Dendritic cell treated with granulocyte-macrophage colony-stimulating factor and Interleukin-4, amounts not matched to agents 40 ng/mL and 50 ng/mL, for 4 days (primary cell): ENCODE measurements at regions of chr19 and their contacts with region 1.

Region 1: GRCh38 chr19:58002384-58003173 is at the start of gene ZNF606:
- H3K4me3 Mint-ChIP-seq: peak within 1 kb of the TSS; percentile 85
- H3K27ac Mint-ChIP-seq: peak within 1 kb of the TSS; percentile 92
- H3K4me1 Mint-ChIP-seq: peaks cover 37% of the 10 kb centered on the region
- H3K27me3 Mint-ChIP-seq: no peaks in the 10 kb centered on the region

Region 2: GRCh38 chr19:57689750-57690149 is 312.8 kb before region 1 on chr19:
- intact Hi-C with region 1: no loop called
- H3K4me3 Mint-ChIP-seq: no peak overlapping the region
- H3K27ac Mint-ChIP-seq: no peak overlapping the region
- H3K4me1 Mint-ChIP-seq: no peaks in the 10 kb centered on the region
- H3K27me3 Mint-ChIP-seq: no peaks in the 10 kb centered on the region

Region 3: DNA sequence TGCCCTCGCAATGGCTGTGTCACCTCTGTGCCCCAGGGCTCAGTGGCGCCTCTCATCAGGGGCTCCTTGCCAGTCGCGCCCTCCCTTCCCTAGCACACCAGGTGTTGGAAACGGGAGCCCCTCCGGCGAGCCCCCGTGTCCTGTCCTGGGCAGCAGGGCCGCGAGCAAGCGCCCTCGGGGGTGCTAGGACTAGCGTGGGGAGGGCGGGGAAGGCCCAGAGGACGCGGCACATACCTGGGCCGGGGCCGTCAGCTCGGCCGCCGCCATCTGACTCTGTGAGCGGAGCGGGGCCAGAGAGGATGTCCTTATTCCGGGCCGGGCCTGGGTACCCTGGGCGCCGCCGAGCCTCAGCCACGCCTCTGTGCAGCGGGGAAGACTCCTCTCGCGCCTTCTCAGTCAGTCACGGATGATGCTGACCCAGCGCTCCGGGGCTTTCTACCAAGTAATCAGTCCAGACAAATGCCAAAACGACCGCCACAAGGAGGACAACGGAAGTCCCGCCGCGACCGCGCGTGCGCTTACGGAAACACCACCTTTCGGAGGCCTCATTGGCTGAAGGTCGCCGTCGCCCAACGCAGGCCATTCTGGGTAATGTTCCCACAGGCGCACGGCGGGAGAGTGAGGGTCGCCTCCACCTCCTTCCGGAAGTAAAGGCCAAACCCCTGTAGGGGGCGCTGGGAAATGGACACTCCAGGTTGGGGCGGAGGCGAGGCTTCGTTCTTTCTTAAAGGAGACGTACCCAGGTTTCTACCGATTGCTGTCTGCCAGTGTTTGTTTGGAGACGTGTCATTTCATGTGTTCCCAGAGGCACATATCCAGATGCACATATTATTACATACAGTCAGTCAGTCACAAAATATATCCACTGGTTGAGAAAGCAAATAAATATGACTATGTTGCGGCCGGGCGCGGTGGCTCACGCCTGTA is 55.1 kb before region 1 on chr19 and contains the start of gene ZNF256:
- intact Hi-C with region 1: loop called (anchors 2 kb)
- H3K4me3 Mint-ChIP-seq: peak within 1 kb of the TSS; percentile 91
- H3K27ac Mint-ChIP-seq: peak within 1 kb of the TSS; percentile 88
- H3K4me1 Mint-ChIP-seq: peaks cover 12% of the 10 kb centered on the region
- H3K27me3 Mint-ChIP-seq: no peaks in the 10 kb centered on the region

Region 4: GRCh38 chr19:58097781-58098681 is 95.5 kb after region 1 on chr19 and contains the start of gene ZSCAN18:
- intact Hi-C with region 1: loop called (anchors 5 kb)
- H3K4me3 Mint-ChIP-seq: peak within 1 kb of the TSS; percentile 85
- H3K27ac Mint-ChIP-seq: peak within 1 kb of the TSS; percentile 98
- H3K4me1 Mint-ChIP-seq: peaks cover 16% of the 10 kb centered on the region
- H3K27me3 Mint-ChIP-seq: no peaks in the 10 kb centered on the region